ENCODE measurements at regions of chr11 and their contacts with region 1.

Region 1: GRCh38 chr11:60985991-60986915 is 14.8 kb downstream of the CD6 start:
- DNase-seq: no peak
- ATAC-seq: peak; percentile 47
- H3K4me3 Mint-ChIP-seq: peak overlapping the region; percentile 24
- H3K27ac Mint-ChIP-seq: peak overlapping the region; percentile 79
- H3K4me1 Mint-ChIP-seq: peaks cover 53% of the 10 kb centered on the region
- H3K27me3 Mint-ChIP-seq: no peaks in the 10 kb centered on the region
- CTCF ChIP-seq: no peak

Region 2: GRCh38 chr11:60513496-60514460 is 472.5 kb before region 1 on chr11:
- CTCF ChIA-PET with region 1: no interaction called
- POLR2A ChIA-PET with region 1: no interaction called
- intact Hi-C with region 1: no loop called
- DNase-seq: no peak
- ATAC-seq: no peak
- H3K4me3 Mint-ChIP-seq: no peak overlapping the region
- H3K27ac Mint-ChIP-seq: no peak overlapping the region
- H3K4me1 Mint-ChIP-seq: peaks cover 14% of the 10 kb centered on the region
- H3K27me3 Mint-ChIP-seq: peaks cover 4% of the 10 kb centered on the region
- CTCF ChIP-seq: no peak

Region 3: DNA sequence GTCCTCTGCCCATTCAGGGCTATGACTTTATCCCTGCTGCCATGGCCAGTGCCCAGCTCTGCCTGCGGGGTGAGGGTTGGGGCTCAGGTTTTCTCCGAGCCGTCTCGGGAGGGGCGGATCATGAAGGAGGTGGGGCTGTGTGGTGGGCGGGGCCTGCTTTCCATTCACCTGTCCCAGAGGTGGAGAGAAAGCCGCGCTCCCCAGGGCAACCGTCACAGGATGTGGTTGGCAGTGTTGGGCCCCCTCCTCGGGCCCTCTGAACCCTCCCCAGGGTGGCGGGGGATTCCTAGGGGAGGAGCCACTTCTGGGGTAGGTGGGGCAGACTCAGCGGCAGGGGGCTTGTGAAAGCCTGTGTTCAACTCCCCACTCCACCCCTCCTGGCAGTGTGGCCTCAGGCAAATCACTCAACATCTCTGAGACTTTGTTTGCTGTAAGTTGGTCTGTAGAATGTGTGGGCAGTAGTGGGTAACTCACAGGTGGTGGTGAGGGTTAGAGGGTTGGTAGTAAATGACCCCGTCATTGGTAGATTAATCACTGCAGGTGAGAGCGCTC is 35.5 kb after region 1 on chr11:
- CTCF ChIA-PET with region 1: no interaction called
- POLR2A ChIA-PET with region 1: interaction called, 4 read pairs
- intact Hi-C with region 1: loop called (anchors 5 kb)
- DNase-seq: peak; percentile 62
- ATAC-seq: peak; percentile 86
- H3K4me3 Mint-ChIP-seq: peak overlapping the region; percentile 74
- H3K27ac Mint-ChIP-seq: peak overlapping the region; percentile 83
- H3K4me1 Mint-ChIP-seq: peaks cover 56% of the 10 kb centered on the region
- H3K27me3 Mint-ChIP-seq: no peaks in the 10 kb centered on the region
- CTCF ChIP-seq: no peak

Measured in activated B cell treated with CpG ODN at 0.5 μM for 24 hours (primary cell).